ENCODE measurements at regions of chr19 and their contacts with region 1.

Region 1: DNA sequence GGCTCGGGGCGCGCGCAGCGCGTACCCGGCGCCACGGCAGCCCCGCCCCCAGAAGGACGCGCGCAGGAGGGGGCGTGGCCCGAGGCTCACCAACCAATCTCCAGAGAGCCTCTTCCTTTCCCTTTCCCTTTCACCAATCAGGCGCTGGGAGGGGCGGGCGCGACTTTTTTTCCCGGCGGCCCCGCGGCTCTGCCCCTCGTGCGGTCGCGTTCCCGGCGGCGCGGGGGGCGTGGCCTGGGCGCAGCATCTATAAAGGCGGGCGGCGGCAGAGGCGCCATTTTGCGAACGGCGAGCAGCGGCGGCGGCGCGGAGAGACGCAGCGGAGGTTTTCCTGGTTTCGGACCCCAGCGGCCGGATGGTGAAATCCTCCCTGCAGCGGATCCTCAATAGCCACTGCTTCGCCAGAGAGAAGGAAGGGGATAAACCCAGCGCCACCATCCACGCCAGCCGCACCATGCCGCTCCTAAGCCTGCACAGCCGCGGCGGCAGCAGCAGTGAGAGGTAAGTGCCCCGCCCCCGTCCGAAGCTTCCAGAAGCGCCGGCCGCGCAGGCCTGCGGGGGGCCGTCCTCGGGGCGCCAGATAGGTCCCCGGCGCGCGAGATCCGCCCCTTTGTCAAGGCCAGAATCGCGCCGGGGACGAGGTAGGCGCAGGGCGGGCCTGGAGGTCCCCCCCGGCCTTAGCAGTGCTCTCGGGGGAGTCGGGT is 12.6 kb downstream of the PEAK3 start:
- DNase-seq: peak; percentile 75 to 100
- H3K4me3 ChIP-seq: peak overlapping the region; percentile 87 to 100 (median 94)
- H3K27ac ChIP-seq: peak overlapping the region; percentile 76
- H3K4me1 ChIP-seq: peaks cover 0 to 20% (median 7%) of the 10 kb centered on the region in 4 experiments; a peak in 5 of 7 replicates
- H3K27me3 ChIP-seq: no peaks in the 10 kb centered on the region
- CTCF ChIP-seq: no peak
- EP300 ChIP-seq: no peak
- POLR2A ChIP-seq: peak; percentile 99
- RAD21 ChIP-seq: no peak

Region 2: GRCh38 chr19:1767464-1767933 is 501.9 kb before region 1 on chr19:
- CTCF ChIA-PET with region 1: no interaction called
- POLR2A ChIA-PET with region 1: no interaction called
- DNase-seq: peak in 1 of 2 experiments; percentile 95
- H3K4me3 ChIP-seq: no peak overlapping the region
- H3K27ac ChIP-seq: no peak overlapping the region
- H3K4me1 ChIP-seq: peaks cover 0 to 20% (median 7%) of the 10 kb centered on the region in 4 experiments; a peak in 6 of 7 replicates
- H3K27me3 ChIP-seq: peaks cover 56 to 74% (median 68%) of the 10 kb centered on the region in 4 experiments
- CTCF ChIP-seq: peak; percentile 87 to 96 (median 89)
- EP300 ChIP-seq: no peak
- POLR2A ChIP-seq: no peak
- RAD21 ChIP-seq: peak; percentile 75

Region 3: DNA sequence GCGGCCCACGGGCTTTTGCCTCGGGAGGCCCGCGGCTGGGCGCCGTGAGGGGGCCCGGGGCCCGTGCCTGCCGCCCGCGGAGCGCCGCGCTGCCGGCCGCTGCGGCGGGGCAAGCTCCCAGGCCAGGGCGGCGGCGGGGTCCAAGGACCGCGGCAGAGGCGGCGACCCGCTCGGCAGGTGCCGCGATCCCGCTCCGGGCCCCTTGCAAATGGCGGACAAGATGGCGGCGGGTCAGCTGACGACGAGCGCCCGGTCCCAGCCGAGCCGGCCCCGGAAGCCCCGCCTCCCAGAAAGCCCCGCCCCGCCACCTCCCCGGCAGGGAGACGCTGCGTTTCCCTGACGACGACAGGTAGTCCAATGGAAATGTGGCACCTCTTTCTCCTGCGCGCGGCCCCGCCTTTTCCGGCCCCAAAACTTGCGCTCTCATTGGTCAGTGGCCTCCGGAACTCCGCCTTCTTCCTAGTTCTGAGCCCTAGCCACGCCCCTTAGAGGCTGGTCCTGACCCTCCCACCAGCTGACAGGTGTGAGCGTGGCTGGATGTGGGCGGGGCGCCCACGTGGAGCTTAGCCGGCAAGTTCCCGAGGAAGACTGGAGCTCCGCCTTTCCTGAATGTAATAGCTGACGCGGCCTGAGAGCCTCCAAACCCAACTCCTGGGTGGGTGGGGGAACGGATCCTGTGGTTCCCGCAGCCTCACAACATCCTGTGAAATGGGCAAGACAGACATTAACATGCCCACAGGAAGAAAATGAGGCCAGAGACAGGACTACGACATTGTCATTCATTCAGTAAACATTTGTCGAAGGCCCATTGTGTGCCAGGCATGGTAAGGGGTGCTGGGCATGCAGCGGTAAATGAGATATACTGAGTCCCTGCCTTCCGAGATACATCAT is 117.8 kb before region 1 on chr19 and contains the start of gene AP3D1:
- CTCF ChIA-PET with region 1: interaction called, 12 read pairs
- POLR2A ChIA-PET with region 1: no interaction called
- DNase-seq: peak; percentile 99 to 100
- H3K4me3 ChIP-seq: peak within 1 kb of the TSS; percentile 64 to 99 (median 92)
- H3K27ac ChIP-seq: peak within 1 kb of the TSS; percentile 36
- H3K4me1 ChIP-seq: peaks cover 7 to 14% (median 13%) of the 10 kb centered on the region in 4 experiments
- H3K27me3 ChIP-seq: no peaks in the 10 kb centered on the region
- CTCF ChIP-seq: no peak
- EP300 ChIP-seq: no peak
- POLR2A ChIP-seq: peak in 1 of 2 experiments; percentile 29; a peak in 1 of 3 replicates
- RAD21 ChIP-seq: no peak
- total RNA-seq, gene AP3D1: 174 and 184 TPM in 2 replicates

Region 4: GRCh38 chr19:2210206-2210605 is 59.2 kb before region 1 on chr19:
- CTCF ChIA-PET with region 1: no interaction called
- POLR2A ChIA-PET with region 1: no interaction called
- DNase-seq: no peak
- H3K4me3 ChIP-seq: no peak overlapping the region
- H3K27ac ChIP-seq: no peak overlapping the region
- H3K4me1 ChIP-seq: no peaks in the 10 kb centered on the region
- H3K27me3 ChIP-seq: no peaks in the 10 kb centered on the region
- CTCF ChIP-seq: no peak
- EP300 ChIP-seq: no peak
- POLR2A ChIP-seq: no peak
- RAD21 ChIP-seq: no peak

Region 5: GRCh38 chr19:2253106-2254053 is 16.0 kb before region 1 on chr19:
- CTCF ChIA-PET with region 1: interaction called, 42 read pairs
- POLR2A ChIA-PET with region 1: interaction called, 330 read pairs
- DNase-seq: peak in 1 of 2 experiments; percentile 84
- H3K4me3 ChIP-seq: peak overlapping the region; percentile 35 to 65 (median 47)
- H3K27ac ChIP-seq: no peak overlapping the region
- H3K4me1 ChIP-seq: peaks cover 0 to 4% (median 2%) of the 10 kb centered on the region in 4 experiments; a peak in 5 of 7 replicates
- H3K27me3 ChIP-seq: peaks cover 0 to 23% (median 12%) of the 10 kb centered on the region in 4 experiments; a peak in 6 of 7 replicates
- CTCF ChIP-seq: peak; percentile 50 to 59 (median 54)
- EP300 ChIP-seq: no peak
- POLR2A ChIP-seq: no peak
- RAD21 ChIP-seq: peak; percentile 30 to 50; a peak in 3 of 4 replicates

Region 6: DNA sequence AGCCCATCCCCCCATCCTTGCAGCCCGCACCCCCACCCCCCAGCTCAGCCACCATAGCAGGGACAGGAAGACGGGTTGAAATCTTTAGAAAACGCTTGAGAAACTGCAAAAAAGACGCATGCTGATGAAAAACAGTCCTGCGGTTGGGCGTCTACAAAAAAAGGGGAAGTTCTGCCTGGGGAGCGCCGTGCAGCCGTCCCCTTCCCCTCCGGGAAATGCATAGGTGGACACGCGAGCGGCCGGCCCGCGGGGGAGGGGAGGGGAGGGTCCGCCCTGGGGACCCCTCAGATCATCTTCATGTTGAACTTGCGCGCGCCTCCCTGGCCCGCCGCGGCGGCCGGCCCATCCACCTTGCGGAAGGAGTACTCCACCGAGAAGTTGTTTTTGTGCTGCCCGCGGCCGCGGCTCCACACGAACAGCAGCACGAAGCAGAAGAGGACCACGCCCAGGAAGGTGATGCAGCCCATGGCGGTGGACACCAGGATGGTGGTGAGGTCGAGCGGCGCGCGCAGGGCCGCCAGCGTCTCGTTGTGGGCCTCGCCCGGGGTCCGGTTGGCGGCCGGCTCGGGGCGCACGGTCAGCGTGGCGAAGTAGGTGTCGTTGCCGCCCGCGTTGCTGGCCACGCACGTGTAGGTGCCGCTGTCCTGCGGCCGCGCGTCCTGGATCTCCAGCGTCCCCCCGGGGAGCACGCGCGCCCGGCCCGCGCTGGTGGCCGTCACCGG is 20.5 kb after region 1 on chr19:
- CTCF ChIA-PET with region 1: interaction called, 46 read pairs
- POLR2A ChIA-PET with region 1: interaction called, 25 read pairs
- DNase-seq: no peak
- H3K4me3 ChIP-seq: peak overlapping the region; percentile 17 to 56 (median 20); a peak in 6 of 8 replicates
- H3K27ac ChIP-seq: no peak overlapping the region
- H3K4me1 ChIP-seq: peaks cover 0 to 22% (median 9%) of the 10 kb centered on the region in 4 experiments; a peak in 5 of 7 replicates
- H3K27me3 ChIP-seq: peaks cover 40 to 67% (median 59%) of the 10 kb centered on the region in 4 experiments
- CTCF ChIP-seq: no peak
- EP300 ChIP-seq: no peak
- POLR2A ChIP-seq: no peak
- RAD21 ChIP-seq: no peak

Region 7: GRCh38 chr19:2321565-2322283 is 52.3 kb after region 1 on chr19:
- CTCF ChIA-PET with region 1: interaction called, 106 read pairs
- POLR2A ChIA-PET with region 1: interaction called, 29 read pairs
- DNase-seq: no peak
- H3K4me3 ChIP-seq: no peak overlapping the region
- H3K27ac ChIP-seq: no peak overlapping the region
- H3K4me1 ChIP-seq: no peaks in the 10 kb centered on the region
- H3K27me3 ChIP-seq: no peaks in the 10 kb centered on the region
- CTCF ChIP-seq: no peak
- EP300 ChIP-seq: no peak
- POLR2A ChIP-seq: no peak
- RAD21 ChIP-seq: no peak